ENCODE measurements at regions of chr15 and their contacts with region 1.

Region 1: GRCh38 chr15:68875377-68876116 is 54.8 kb upstream of the SPESP1 start:
- DNase-seq: peak; percentile 93
- H3K4me3 ChIP-seq: peak overlapping the region; percentile 29 to 49
- H3K27ac ChIP-seq: no peak overlapping the region
- H3K4me1 ChIP-seq: peaks cover 0 to 8% (median 4%) of the 10 kb centered on the region in 4 donors
- H3K27me3 ChIP-seq: peaks cover 0 to 16% of the 10 kb centered on the region in 2 donors
- CTCF ChIP-seq: peak; percentile 82 to 94

Region 2: DNA sequence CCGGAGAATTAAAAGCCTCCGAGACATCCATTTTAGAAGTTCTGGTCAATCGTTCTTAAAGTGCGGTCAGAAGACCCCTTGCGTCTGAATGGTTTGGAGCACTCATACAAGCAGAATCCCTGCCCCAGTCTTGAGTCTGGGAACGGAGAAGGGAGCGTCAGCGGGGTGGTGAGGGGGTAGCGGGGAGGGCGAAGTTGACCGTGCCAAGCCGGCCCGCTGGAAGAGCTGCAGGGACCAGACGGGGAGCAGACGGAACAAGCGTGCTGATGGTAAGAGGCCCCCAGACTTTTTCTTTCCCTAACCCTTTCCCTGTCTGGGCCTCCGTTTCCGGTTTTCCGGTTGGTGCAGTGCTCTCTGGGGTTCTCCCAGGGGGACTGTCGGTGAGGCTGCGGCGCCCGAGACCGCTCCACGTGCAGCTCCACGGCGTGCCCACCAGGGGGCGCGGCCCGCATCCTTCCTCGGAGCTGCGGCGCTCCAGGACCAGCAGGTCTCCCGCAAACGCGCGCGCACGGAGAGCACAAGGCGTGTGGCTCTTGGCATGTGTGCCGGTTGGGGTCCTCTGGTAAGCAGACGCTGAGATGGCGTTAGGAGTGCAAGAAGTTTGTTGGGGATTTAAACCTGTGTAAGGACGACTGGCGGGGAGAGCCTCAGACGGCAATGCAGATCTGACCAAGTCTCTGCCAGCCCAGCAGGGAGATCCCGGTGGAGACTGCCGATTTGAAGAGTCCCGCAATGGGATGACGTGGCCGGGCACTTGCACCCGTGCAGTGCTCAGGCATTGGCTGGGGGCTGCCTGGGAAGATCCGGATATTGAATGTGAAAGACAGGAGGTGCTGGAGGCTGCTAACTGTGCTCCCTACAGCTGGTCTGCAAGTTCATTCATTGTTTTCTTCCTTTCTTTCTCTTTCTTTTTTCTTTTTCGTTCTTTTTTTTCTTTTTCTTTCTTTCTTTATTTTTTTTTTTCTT is 315.9 kb before region 1 on chr15:
- intact Hi-C with region 1: loop called (anchors 2 kb)
- DNase-seq: peak; percentile 60 to 87
- H3K4me3 ChIP-seq: peak overlapping the region; percentile 43 to 56
- H3K27ac ChIP-seq: peak overlapping the region in 1 of 2 donors; percentile 0
- H3K4me1 ChIP-seq: peaks cover 0 to 14% (median 9%) of the 10 kb centered on the region in 4 donors
- H3K27me3 ChIP-seq: peaks cover 0 to 19% of the 10 kb centered on the region in 2 donors
- CTCF ChIP-seq: peak; percentile 96

Region 3: DNA sequence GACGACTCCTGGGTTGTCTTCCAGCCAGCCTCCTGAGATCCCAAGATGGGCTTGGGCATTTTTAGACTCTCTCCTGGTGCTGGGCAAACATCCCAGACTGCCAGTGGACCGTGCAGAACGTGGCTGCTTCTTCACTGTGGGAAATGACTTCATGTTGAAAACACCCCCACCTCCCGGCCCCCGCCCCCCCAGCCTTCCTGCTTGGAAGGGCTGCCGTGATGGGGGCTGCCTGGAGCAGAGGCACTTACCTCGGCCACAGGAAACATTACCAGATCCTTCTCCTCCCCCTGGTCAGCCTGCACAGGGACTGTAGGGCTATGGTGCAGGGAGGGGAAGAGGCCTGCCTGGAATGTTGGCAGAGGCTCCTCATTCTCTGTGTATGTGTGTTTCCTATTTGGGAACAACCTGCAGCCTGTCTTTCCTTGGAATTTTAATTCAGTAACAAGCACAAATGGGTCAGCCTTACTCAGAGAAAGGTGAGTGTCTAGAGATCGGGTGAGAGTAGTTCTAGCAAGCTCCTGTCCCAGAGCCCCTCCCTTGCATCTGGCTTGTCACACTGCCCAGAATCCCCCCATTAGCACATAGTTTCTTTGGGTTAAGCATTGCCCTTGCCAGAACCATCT is 145.6 kb before region 1 on chr15:
- intact Hi-C with region 1: loop called (anchors 5 kb)
- DNase-seq: no peak
- H3K4me3 ChIP-seq: no peak overlapping the region
- H3K27ac ChIP-seq: no peak overlapping the region
- H3K4me1 ChIP-seq: peaks cover 0 to 13% (median 8%) of the 10 kb centered on the region in 4 donors
- H3K27me3 ChIP-seq: peaks cover 0 to 2% of the 10 kb centered on the region in 2 donors
- CTCF ChIP-seq: no peak

Region 4: DNA sequence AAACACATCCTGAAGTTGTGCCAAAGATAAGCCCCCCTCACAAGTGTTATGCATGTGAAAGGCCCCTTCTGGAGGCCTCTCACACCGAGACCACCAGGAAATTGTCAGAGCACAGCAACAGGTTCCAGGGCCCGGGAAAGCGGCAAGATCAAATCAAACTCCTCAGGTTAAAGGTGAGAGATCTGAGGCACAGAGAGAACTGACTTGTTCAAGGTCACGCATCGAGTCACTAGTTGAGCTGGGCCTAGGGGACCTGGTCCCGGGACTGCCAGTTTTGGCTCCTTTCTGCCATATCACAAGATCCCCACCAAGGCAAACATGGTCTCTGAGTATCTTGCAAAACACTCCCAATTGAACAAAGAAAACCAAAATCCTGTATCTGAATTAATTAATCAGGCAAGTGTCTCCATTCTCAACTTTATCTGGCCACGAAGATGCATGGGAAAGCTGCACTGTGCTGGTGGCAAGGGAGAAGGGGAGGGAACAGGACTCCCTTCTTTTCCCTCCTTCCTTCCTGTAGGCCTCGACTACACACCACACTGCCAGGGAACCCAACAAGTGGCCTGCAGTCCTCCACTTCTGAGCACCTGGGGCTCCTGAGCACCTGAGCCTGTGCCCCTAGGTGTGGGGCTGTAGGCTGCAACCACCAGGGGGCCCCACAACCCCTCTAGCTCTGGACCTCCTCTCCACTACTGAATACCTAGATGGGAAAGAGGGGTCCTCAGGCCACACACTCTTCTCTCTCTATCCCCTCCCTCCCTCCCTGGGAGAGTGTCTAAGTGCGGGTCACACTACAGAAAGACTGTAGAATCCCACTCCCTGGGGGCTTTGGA is 92.1 kb before region 1 on chr15:
- intact Hi-C with region 1: loop called (anchors 10 kb)
- DNase-seq: peak in 1 of 2 donors; percentile 59
- H3K4me3 ChIP-seq: no peak overlapping the region
- H3K27ac ChIP-seq: no peak overlapping the region
- H3K4me1 ChIP-seq: peaks cover 0 to 13% (median 3%) of the 10 kb centered on the region in 4 donors
- H3K27me3 ChIP-seq: no peaks in the 10 kb centered on the region
- CTCF ChIP-seq: peak in 1 of 2 experiments; percentile 42